Right cardiac atrium (tissue), 5 donors: ENCODE measurements at regions of chr19 and their contacts with region 1.

Region 1: DNA sequence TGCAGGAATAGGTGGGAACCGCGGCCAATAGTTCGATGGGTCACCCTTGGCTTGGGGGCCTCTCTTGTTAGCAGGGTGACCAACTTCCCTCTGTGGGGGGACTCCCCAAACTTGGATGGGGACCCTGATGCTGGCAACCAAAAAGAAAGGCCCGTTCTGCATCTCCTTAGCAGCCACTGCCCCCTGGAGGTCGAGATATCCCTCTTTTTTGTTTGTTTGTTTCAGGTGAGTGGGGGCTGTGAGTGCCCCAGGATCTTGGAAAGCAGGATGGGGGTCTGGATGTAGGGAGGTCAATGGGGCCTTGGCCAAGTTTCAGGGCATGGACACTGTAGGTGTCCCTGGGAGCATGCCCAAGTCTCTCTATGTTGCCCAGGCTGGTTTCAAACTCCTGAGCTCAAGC is 7.7 kb upstream of the CRTC1 start:
- DNase-seq: no peak
- ATAC-seq: no peak
- H3K4me3 ChIP-seq: no peak overlapping the region
- H3K27ac ChIP-seq: no peak overlapping the region
- H3K4me1 ChIP-seq: peaks cover 9% of the 10 kb centered on the region
- H3K27me3 ChIP-seq: no peaks in the 10 kb centered on the region

Region 2: GRCh38 chr19:18588611-18589379 is 87.0 kb before region 1 on chr19 and contains the start of gene REX1BD:
- intact Hi-C with region 1: loop called in 2 of 4 experiments (anchors 10 kb)
- DNase-seq: peak; percentile 90 to 96 (median 96)
- ATAC-seq: peak; percentile 93
- H3K4me3 ChIP-seq: peak within 1 kb of the TSS; percentile 51
- H3K27ac ChIP-seq: peak within 1 kb of the TSS; percentile 76
- H3K4me1 ChIP-seq: peaks cover 5% of the 10 kb centered on the region
- H3K27me3 ChIP-seq: no peaks in the 10 kb centered on the region
- total RNA-seq, gene REX1BD: 71.0 to 90.7 (median 77.1) TPM

Region 3: GRCh38 chr19:18596752-18597157 is 79.0 kb before region 1 on chr19:
- intact Hi-C with region 1: loop called in 3 of 4 experiments (anchors 5 to 10 kb)
- DNase-seq: peak; percentile 66 to 85 (median 80)
- ATAC-seq: peak; percentile 53 to 61
- H3K4me3 ChIP-seq: no peak overlapping the region
- H3K27ac ChIP-seq: no peak overlapping the region
- H3K4me1 ChIP-seq: no peaks in the 10 kb centered on the region
- H3K27me3 ChIP-seq: no peaks in the 10 kb centered on the region

Region 4: GRCh38 chr19:18710996-18711751 is 35.4 kb after region 1 on chr19:
- intact Hi-C with region 1: no loop called
- DNase-seq: peak; percentile 90 to 94 (median 92)
- ATAC-seq: peak; percentile 84 to 88
- H3K4me3 ChIP-seq: no peak overlapping the region
- H3K27ac ChIP-seq: no peak overlapping the region
- H3K4me1 ChIP-seq: no peaks in the 10 kb centered on the region
- H3K27me3 ChIP-seq: no peaks in the 10 kb centered on the region

Region 5: DNA sequence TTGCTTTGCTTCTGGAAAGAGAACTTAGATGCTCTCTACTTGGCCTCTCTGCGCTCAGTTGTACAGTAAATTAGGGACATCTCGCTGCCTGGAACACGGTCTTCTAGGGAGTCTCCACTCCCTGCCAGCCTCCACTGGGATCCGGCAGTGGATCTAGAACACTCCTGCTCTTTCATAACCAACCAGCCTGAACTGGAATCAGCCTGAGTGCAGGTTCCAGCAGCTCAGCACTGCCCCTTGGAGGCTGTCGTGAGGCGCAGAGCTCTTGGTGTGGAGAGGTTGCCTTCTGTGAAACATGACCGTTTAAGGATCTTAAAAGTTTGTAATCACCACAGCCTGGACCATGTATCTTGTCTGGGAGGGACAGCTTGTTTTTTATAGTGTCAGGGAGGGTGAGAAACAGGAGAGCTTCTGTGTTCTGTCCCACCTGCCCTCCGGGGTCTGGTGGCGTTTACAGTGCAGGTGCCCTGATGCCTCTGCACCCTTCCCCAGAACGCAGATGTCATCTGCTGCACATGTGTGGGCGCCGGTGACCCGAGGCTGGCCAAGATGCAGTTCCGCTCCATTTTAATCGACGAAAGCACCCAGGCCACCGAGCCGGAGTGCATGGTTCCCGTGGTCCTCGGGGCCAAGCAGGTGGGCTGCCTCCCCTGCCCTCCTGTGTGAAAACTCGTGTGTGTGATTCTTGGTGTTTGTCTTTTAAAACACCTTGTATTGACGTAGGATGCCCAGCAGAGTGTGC is 180.8 kb after region 1 on chr19:
- intact Hi-C with region 1: no loop called
- DNase-seq: no peak
- ATAC-seq: no peak
- H3K4me3 ChIP-seq: no peak overlapping the region
- H3K27ac ChIP-seq: no peak overlapping the region
- H3K4me1 ChIP-seq: no peaks in the 10 kb centered on the region
- H3K27me3 ChIP-seq: no peaks in the 10 kb centered on the region